Endothelial cell of umbilical vein (primary cell): ENCODE measurements at regions of chr18 and their contacts with region 1.

Region 1: GRCh38 chr18:63155169-63155852 is 164.3 kb downstream of the BCL2 start:
- DNase-seq: peak; percentile 57
- H3K4me3 ChIP-seq: no peak overlapping the region
- H3K27ac ChIP-seq: no peak overlapping the region
- H3K4me1 ChIP-seq: no peaks in the 10 kb centered on the region
- H3K27me3 ChIP-seq: peaks cover 14% of the 10 kb centered on the region in 2 experiments
- CTCF ChIP-seq: peak; percentile 77 to 94
- POLR2A ChIP-seq: no peak

Region 2: DNA sequence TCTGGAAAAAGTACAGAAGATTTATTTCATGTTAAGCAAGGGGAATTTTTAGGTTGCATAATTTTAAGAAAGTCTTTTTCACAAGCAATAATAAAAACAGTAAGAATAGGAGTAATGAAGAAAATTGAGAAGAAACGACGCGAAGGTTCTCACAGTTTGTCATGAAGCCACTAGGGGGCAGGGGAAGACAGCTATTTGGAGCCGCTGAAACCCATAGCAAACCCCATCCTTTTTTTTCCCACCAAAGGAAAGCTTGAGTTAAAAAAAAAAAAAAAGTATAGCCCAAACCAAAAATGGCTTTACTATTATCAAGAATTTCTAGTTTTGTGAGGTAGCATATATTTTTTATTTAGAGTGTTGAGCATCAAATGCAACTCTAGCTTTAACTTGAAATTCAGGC is 139.0 kb before region 1 on chr18:
- CTCF ChIA-PET with region 1: interaction called, 22 read pairs
- POLR2A ChIA-PET with region 1: no interaction called
- dilution Hi-C with region 1: no loop called
- intact Hi-C with region 1: loop called (anchors 1 kb)
- DNase-seq: peak; percentile 39
- H3K4me3 ChIP-seq: no peak overlapping the region
- H3K27ac ChIP-seq: no peak overlapping the region
- H3K4me1 ChIP-seq: no peaks in the 10 kb centered on the region
- H3K27me3 ChIP-seq: peaks cover 18 to 21% of the 10 kb centered on the region in 2 experiments
- CTCF ChIP-seq: peak; percentile 71 to 75
- POLR2A ChIP-seq: no peak

Region 3: DNA sequence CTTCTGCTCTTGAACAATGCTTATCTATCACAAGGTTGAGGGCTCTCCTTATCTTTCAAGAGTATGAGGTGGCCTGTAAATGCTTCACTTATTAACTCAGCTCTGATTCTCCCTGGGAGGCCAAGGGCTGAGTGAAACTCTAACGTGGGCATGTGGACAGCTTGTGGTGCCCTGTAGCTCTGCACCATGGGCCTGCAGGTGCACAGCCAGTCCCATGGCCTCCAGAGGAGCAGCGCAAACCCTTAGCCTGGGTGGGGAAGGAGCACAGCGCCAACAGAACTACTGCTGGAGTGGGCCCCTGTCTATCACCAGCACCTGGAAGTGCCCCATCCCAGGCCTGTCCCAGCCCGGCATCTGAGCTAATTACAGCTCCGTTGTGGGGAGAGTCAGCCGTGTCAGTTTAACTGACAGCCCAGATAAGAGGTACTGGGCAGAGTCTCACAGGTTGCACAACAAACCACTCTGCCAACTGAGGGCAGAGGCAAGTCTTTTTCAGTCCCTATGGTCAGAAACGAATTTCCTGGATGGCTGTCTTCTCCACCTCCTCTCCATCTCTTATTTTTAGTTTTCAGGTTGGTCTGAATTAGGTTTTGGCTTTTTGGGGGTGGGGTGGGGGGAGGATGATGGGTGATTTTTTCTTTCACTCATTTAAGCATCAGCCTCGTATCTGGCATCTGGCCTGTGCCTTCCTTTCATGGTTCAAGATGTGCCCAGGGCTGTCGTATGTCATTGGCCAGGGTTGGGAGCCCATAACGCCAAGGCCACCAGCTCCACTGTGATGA is 55.3 kb before region 1 on chr18:
- CTCF ChIA-PET with region 1: no interaction called
- POLR2A ChIA-PET with region 1: no interaction called
- dilution Hi-C with region 1: no loop called
- intact Hi-C with region 1: no loop called
- DNase-seq: no peak
- H3K4me3 ChIP-seq: no peak overlapping the region
- H3K27ac ChIP-seq: no peak overlapping the region
- H3K4me1 ChIP-seq: no peaks in the 10 kb centered on the region
- H3K27me3 ChIP-seq: peaks cover 9 to 19% of the 10 kb centered on the region in 2 experiments
- CTCF ChIP-seq: no peak
- POLR2A ChIP-seq: no peak

Region 4: DNA sequence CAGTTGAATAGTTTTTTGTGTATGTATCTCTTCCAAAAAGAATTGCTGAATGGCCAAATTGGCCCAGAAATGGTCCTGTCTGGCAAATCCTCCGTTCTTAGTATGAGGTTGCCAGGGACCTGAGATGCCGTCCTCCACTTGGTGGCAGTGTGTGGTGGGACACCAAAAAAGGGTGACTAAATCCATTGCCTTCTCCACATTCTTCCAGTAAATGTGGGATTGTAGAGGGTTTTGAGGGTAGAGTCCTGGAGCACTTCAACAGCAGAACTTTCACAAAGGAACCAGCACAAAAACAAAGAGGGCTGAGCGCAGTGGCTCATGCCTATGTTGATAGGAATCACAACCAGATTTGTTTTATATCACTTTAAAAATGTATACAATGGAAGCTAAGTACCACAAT is 35.7 kb before region 1 on chr18:
- CTCF ChIA-PET with region 1: interaction called, 9 read pairs
- POLR2A ChIA-PET with region 1: no interaction called
- dilution Hi-C with region 1: no loop called
- intact Hi-C with region 1: loop called (anchors 1 kb)
- DNase-seq: peak; percentile 37
- H3K4me3 ChIP-seq: no peak overlapping the region
- H3K27ac ChIP-seq: no peak overlapping the region
- H3K4me1 ChIP-seq: no peaks in the 10 kb centered on the region
- H3K27me3 ChIP-seq: peaks cover 7 to 47% of the 10 kb centered on the region in 2 experiments
- CTCF ChIP-seq: peak in 1 of 2 donors; percentile 35
- POLR2A ChIP-seq: no peak

Region 5: GRCh38 chr18:63138436-63139340 is 16.6 kb before region 1 on chr18:
- CTCF ChIA-PET with region 1: interaction called, 17 read pairs
- POLR2A ChIA-PET with region 1: no interaction called
- dilution Hi-C with region 1: no loop called
- intact Hi-C with region 1: loop called (anchors 2 kb)
- DNase-seq: no peak
- H3K4me3 ChIP-seq: peak overlapping the region in 1 of 3 experiments; percentile 16
- H3K27ac ChIP-seq: peak overlapping the region; percentile 75
- H3K4me1 ChIP-seq: peaks cover 22% of the 10 kb centered on the region
- H3K27me3 ChIP-seq: no peaks in the 10 kb centered on the region
- CTCF ChIP-seq: no peak
- POLR2A ChIP-seq: no peak

Region 6: DNA sequence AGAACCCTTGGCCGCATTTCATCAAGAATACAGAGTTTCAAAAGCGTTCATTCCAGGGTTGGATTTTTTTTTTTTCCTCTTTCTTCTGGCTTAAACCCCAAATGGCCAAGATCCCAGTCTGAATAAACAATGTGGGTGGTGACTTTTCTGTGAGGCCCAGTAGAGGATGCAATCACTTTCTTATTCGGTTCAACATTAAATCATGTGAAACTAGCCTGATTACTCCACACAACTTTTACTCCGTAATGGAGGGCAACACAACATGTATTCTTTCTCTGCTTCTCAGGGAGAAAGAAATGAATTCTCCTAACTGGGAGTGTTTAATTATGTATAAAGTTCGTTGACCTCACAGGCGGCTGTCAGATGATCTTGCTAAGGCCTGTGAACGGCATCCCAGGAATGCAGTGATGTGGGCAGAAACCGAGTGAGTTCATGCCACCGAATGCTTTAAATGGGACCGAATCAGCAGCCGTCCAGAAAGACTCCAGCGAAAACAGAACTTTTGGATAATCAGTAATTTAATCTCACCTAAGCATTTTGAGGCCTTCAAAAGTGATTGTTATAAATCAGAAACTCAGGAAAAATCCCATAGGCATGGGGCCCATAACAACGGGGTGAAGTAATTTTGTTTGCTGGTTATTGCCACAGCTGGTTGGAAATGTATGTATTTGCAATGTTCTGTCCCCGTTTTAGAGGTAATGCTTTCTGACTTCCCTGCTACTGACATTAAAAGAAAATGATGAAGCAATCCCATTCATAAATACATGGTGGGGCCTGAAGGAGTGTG is 82.8 kb after region 1 on chr18:
- CTCF ChIA-PET with region 1: no interaction called
- POLR2A ChIA-PET with region 1: no interaction called
- dilution Hi-C with region 1: no loop called
- intact Hi-C with region 1: no loop called
- DNase-seq: peak; percentile 84
- H3K4me3 ChIP-seq: no peak overlapping the region
- H3K27ac ChIP-seq: peak overlapping the region; percentile 21
- H3K4me1 ChIP-seq: peaks cover 7% of the 10 kb centered on the region
- H3K27me3 ChIP-seq: no peaks in the 10 kb centered on the region
- CTCF ChIP-seq: no peak
- POLR2A ChIP-seq: no peak